ENCODE measurements at regions of chr15 and their contacts with region 1.

Region 1: DNA sequence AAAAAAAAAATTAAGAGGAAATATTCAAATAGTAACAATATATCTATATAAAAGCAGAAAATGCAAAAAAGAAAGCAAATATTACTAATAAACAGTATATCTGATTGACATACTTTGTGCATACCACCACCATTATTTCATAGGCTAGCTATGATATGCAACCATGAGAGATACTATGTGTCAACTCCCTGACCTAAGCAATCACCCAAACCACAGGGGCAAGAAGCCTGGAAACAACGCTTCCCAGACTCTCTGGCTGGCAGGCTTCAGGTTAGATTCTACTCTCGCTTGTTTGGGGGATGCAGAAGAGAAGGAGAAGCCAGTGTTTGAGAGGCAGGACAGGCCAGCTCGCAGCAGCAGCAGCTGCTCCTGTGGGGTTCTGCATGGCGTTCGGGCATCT is 169.3 kb upstream of the TPM1 start:
- DNase-seq: no peak
- ATAC-seq: no peak
- H3K4me3 Mint-ChIP-seq: no peak overlapping the region
- H3K27ac Mint-ChIP-seq: no peak overlapping the region
- H3K4me1 Mint-ChIP-seq: peaks cover 28% of the 10 kb centered on the region
- H3K27me3 Mint-ChIP-seq: no peaks in the 10 kb centered on the region
- CTCF ChIP-seq: no peak

Region 2: DNA sequence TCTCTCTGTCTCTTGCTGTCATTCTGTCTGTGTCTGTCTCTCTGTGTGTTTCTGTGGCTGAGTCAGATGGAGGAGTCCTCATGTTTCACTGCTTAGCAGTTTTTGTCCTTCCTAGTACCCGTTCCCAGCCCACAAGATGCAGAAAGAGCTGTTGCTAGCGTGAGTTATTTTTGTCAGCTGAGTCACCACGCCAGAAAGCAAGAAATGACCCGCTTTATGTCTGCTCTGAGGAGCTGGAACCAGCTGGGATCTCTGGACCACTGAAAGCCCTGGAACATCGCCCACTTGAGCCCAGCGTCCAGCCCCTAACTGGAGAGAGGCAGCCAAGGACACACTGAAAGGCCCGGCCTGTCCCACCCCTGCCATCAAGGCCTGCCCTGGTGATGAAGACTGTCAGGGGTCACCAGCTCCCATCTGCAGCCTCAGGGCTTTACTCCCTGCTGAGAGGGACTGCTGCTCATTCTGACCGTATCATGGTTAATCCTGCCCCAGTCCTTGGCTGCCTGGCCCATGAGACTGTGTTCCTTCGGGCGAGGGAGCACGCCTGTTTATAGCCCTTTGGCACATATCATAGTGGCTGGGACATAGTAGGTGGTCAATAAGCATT is 67.7 kb after region 1 on chr15:
- CTCF ChIA-PET with region 1: no interaction called
- POLR2A ChIA-PET with region 1: interaction called, 10 read pairs
- DNase-seq: no peak
- ATAC-seq: no peak; the same call in 1 of the 2 replicates
- H3K4me3 Mint-ChIP-seq: no peak overlapping the region
- H3K27ac Mint-ChIP-seq: no peak overlapping the region
- H3K4me1 Mint-ChIP-seq: peaks cover 7% of the 10 kb centered on the region
- H3K27me3 Mint-ChIP-seq: no peaks in the 10 kb centered on the region
- CTCF ChIP-seq: no peak

Measured in WTC11 (cell line).